CD8-positive, alpha-beta memory T cell (primary cell): ENCODE measurements at regions of chr1 and their contacts with region 1.

Region 1: GRCh38 chr1:41683681-41684500 is 199.4 kb upstream of the EDN2 start:
- DNase-seq: peak in 1 of 5 donors; percentile 21
- H3K4me3 ChIP-seq: peak overlapping the region; percentile 5
- H3K4me3 Mint-ChIP-seq: peak overlapping the region in 6 of 7 donors; percentile 46 to 85 (median 70)
- H3K27ac ChIP-seq: peak overlapping the region; percentile 10
- H3K27ac Mint-ChIP-seq: peak overlapping the region; percentile 8 to 77 (median 48)
- H3K4me1 ChIP-seq: peaks cover 57% of the 10 kb centered on the region
- H3K4me1 Mint-ChIP-seq: peaks cover 70 to 81% (median 71%) of the 10 kb centered on the region in 3 donors
- H3K27me3 ChIP-seq: no peaks in the 10 kb centered on the region
- H3K27me3 Mint-ChIP-seq: peaks cover 0 to 1% of the 10 kb centered on the region in 2 donors

Region 2: GRCh38 chr1:40951943-40952743 is 731.7 kb before region 1 on chr1:
- CTCF ChIA-PET with region 1: no interaction called
- POLR2A ChIA-PET with region 1: no interaction called
- DNase-seq: peak; percentile 30 to 64 (median 42)
- H3K4me3 ChIP-seq: no peak overlapping the region
- H3K4me3 Mint-ChIP-seq: peak overlapping the region in 1 of 7 donors; percentile 20
- H3K27ac ChIP-seq: no peak overlapping the region
- H3K27ac Mint-ChIP-seq: no peak overlapping the region
- H3K4me1 ChIP-seq: peaks cover 7% of the 10 kb centered on the region
- H3K4me1 Mint-ChIP-seq: peaks cover 2 to 16% (median 12%) of the 10 kb centered on the region in 3 donors
- H3K27me3 ChIP-seq: no peaks in the 10 kb centered on the region
- H3K27me3 Mint-ChIP-seq: peaks cover 19 to 33% of the 10 kb centered on the region in 2 donors

Region 3: DNA sequence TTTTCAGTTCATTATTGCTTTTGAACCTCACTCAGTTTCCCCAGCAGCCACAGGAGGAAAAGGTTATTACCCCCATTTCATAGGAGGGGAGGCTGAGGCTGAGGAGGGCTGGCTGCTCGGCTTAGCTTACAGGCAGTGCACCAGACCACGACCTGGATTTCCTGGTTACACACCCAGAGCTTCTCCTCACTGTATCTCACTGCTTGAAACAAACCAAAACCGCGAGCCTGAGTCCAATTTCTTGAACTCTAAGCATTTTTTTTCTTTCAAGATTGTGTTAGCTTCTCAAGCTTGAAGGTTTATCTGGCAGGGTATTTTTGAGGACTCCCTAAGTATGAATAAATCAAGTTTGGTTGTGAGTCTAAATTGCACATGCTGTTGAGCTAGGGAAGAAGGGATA is 10.5 kb before region 1 on chr1:
- CTCF ChIA-PET with region 1: interaction called, 15 read pairs
- POLR2A ChIA-PET with region 1: interaction called, 3 read pairs
- DNase-seq: peak; percentile 21 to 68 (median 61)
- H3K4me3 ChIP-seq: peak overlapping the region; percentile 60
- H3K4me3 Mint-ChIP-seq: peak overlapping the region; percentile 5 to 80 (median 74)
- H3K27ac ChIP-seq: peak overlapping the region; percentile 5
- H3K27ac Mint-ChIP-seq: peak overlapping the region; percentile 57 to 96 (median 88)
- H3K4me1 ChIP-seq: peaks cover 73% of the 10 kb centered on the region
- H3K4me1 Mint-ChIP-seq: peaks cover 63 to 88% (median 82%) of the 10 kb centered on the region in 3 donors
- H3K27me3 ChIP-seq: no peaks in the 10 kb centered on the region
- H3K27me3 Mint-ChIP-seq: no peaks in the 10 kb centered on the region

Region 4: GRCh38 chr1:42439940-42440339 is 756.0 kb after region 1 on chr1:
- CTCF ChIA-PET with region 1: no interaction called
- POLR2A ChIA-PET with region 1: no interaction called
- DNase-seq: no peak
- H3K4me3 ChIP-seq: no peak overlapping the region
- H3K4me3 Mint-ChIP-seq: no peak overlapping the region
- H3K27ac ChIP-seq: no peak overlapping the region
- H3K27ac Mint-ChIP-seq: no peak overlapping the region
- H3K4me1 ChIP-seq: no peaks in the 10 kb centered on the region
- H3K4me1 Mint-ChIP-seq: no peaks in the 10 kb centered on the region
- H3K27me3 ChIP-seq: no peaks in the 10 kb centered on the region
- H3K27me3 Mint-ChIP-seq: peaks cover 3 to 13% of the 10 kb centered on the region in 2 donors